Heart right ventricle (tissue), 16 donors: ENCODE measurements at regions of chr11 and their contacts with region 1.

Region 1: GRCh38 chr11:57913715-57914704 is 109.7 kb upstream of the OR9Q1 start:
- DNase-seq: no peak
- ATAC-seq: no peak
- H3K4me3 ChIP-seq: no peak overlapping the region
- H3K27ac ChIP-seq: no peak overlapping the region
- H3K4me1 ChIP-seq: no peaks in the 10 kb centered on the region
- H3K27me3 ChIP-seq: no peaks in the 10 kb centered on the region
- CTCF ChIP-seq: no peak

Region 2: GRCh38 chr11:57641011-57641807 is 272.8 kb before region 1 on chr11:
- intact Hi-C with region 1: no loop called
- DNase-seq: no peak
- ATAC-seq: peak in 2 of 8 donors; percentile 14 to 45
- H3K4me3 ChIP-seq: no peak overlapping the region
- H3K27ac ChIP-seq: no peak overlapping the region
- H3K4me1 ChIP-seq: peaks cover 8 to 64% (median 47%) of the 10 kb centered on the region in 9 donors
- H3K27me3 ChIP-seq: peaks cover 0 to 49% (median 2%) of the 10 kb centered on the region in 7 donors
- CTCF ChIP-seq: peak in 8 of 9 donors; percentile 16 to 63 (median 48)

Region 3: DNA sequence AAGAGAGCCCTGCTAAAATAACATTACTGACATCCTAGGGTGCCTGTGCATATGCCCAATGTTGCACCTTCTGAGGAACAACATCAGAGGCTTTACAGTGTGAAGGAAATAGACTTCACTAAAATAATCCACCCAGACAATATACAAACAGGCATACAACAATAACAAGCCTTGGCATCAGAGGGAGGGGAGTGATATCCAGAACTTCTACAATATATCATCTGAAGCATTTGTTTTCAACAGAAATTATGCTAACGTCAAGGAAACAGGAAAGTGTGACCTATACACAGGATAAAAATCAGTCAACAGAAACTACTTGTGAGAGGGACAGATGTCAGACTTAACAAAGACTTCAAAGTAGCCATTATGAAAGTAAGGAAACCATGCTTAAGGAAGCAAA is 71.1 kb before region 1 on chr11:
- intact Hi-C with region 1: loop called in 1 of 10 experiments (anchors 10 kb)
- DNase-seq: no peak
- ATAC-seq: peak in 1 of 8 donors; percentile 11
- H3K4me3 ChIP-seq: no peak overlapping the region
- H3K27ac ChIP-seq: no peak overlapping the region
- H3K4me1 ChIP-seq: no peaks in the 10 kb centered on the region
- H3K27me3 ChIP-seq: peaks cover 0 to 4% (median 0%) of the 10 kb centered on the region in 7 donors
- CTCF ChIP-seq: no peak